Tibial artery (tissue), 4 donors: ENCODE measurements at regions of chrX and their contacts with region 1.

Region 1: GRCh38 chrX:118088084-118088483 is 28.5 kb downstream of the KLHL13 start:
- DNase-seq: no peak
- H3K4me3 ChIP-seq: no peak overlapping the region
- H3K27ac ChIP-seq: no peak overlapping the region
- H3K4me1 ChIP-seq: no peaks in the 10 kb centered on the region
- H3K27me3 ChIP-seq: no peaks in the 10 kb centered on the region
- CTCF ChIP-seq: no peak

Region 2: GRCh38 chrX:118108304-118108703 is 20.2 kb after region 1 on chrX:
- intact Hi-C with region 1: no loop called
- DNase-seq: no peak
- H3K4me3 ChIP-seq: no peak overlapping the region
- H3K27ac ChIP-seq: no peak overlapping the region
- H3K4me1 ChIP-seq: no peaks in the 10 kb centered on the region
- H3K27me3 ChIP-seq: no peaks in the 10 kb centered on the region
- CTCF ChIP-seq: no peak

Region 3: GRCh38 chrX:118126286-118126685 is 38.2 kb after region 1 on chrX:
- intact Hi-C with region 1: loop called (anchors 2 kb)
- DNase-seq: no peak
- H3K4me3 ChIP-seq: no peak overlapping the region
- H3K27ac ChIP-seq: no peak overlapping the region
- H3K4me1 ChIP-seq: no peaks in the 10 kb centered on the region
- H3K27me3 ChIP-seq: no peaks in the 10 kb centered on the region
- CTCF ChIP-seq: no peak